ENCODE measurements at regions of chr17 and their contacts with region 1.

Region 1: DNA sequence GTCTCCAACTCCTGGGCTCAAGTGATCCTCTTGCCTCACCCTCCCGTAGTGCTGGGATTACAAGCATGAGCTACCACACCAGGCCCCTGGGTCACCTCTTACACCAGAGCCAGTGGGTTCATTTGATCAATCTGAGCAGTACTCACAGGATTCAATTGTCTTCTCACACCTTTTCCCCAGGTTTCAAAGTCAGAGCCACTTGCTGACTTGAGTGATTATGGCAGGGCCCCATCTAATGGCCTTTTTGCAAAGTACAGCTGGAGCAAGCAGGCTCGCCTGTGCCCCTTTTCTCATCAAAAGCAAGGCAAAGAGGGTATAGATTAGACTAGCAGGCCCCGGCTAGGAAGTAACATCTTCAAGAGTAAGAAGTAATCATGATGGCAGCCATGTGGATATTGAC is 114.8 kb upstream of the NOL11 start:
- DNase-seq: no peak
- ATAC-seq: peak; percentile 97
- H3K4me3 ChIP-seq: no peak overlapping the region
- H3K27ac ChIP-seq: peak overlapping the region; percentile 46
- H3K4me1 ChIP-seq: peaks cover 33% of the 10 kb centered on the region
- H3K27me3 ChIP-seq: no peaks in the 10 kb centered on the region
- CTCF ChIP-seq: peak; percentile 70 to 87 (median 73); a peak in 5 of 6 replicates
- EP300 ChIP-seq: no peak
- POLR2A ChIP-seq: no peak
- RAD21 ChIP-seq: peak; percentile 95

Region 2: GRCh38 chr17:67475236-67475937 is 127.6 kb before region 1 on chr17:
- CTCF ChIA-PET with region 1: interaction called, 34 read pairs
- POLR2A ChIA-PET with region 1: interaction called, 3 read pairs
- RAD21 ChIA-PET with region 1: interaction called, 4 read pairs
- SMC1A ChIA-PET with region 1: interaction called, 7 read pairs
- in situ Hi-C with region 1: no loop called
- intact Hi-C with region 1: loop called (anchors 1 kb)
- DNase-seq: peak; percentile 53
- ATAC-seq: peak; percentile 98
- H3K4me3 ChIP-seq: no peak overlapping the region; the same call in 1 of the 2 replicates
- H3K27ac ChIP-seq: peak overlapping the region; percentile 36; the same call in 1 of the 2 replicates
- H3K4me1 ChIP-seq: peaks cover 21% of the 10 kb centered on the region
- H3K27me3 ChIP-seq: no peaks in the 10 kb centered on the region
- CTCF ChIP-seq: peak; percentile 95 to 99 (median 96); a peak in 5 of 6 replicates
- EP300 ChIP-seq: no peak
- POLR2A ChIP-seq: no peak
- RAD21 ChIP-seq: peak; percentile 96

Region 3: DNA sequence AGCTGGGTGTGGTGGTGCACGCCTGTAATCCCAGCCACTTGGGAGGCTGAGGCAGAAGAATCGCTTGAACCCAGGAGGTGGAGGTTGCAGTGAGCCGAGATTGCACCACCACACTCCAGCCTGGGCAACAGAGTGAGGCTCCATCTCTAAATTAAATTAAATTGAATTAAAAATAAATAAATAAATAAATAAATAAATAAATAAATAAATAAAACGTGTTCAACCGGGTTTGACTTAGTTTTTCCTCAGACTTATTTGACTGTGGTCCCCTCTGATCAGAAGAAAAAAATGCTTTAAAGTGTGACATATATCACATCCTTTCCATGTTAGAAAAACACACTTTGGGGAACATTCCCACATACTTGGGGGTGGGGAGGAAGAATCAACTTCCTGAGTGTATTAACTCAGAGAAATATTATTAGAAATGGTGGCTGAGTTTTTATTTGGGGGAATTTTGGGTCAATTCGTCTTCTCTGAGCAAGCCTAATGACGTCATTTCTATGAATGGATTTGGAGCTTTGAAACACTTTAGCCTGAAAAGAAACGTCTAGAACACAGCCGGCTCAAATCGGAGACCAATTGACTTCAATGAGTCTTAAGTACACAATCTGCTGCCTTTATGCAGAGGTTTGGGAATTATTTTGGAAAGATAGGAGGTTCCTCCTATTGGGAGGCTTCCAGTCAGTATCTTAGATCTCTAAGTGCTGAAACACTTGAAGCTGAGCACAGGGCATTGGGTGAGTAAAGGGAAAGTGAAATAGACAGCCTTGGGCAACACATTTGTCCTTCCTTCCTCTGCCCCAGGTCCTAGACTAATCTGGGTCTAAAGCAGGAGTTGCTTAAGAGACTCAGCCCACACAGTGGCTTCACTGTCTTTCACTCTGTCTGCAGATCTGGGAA is 93.3 kb before region 1 on chr17:
- CTCF ChIA-PET with region 1: interaction called, 11 read pairs
- POLR2A ChIA-PET with region 1: no interaction called
- RAD21 ChIA-PET with region 1: interaction called, 11 read pairs
- SMC1A ChIA-PET with region 1: interaction called, 5 read pairs
- in situ Hi-C with region 1: no loop called
- intact Hi-C with region 1: no loop called
- DNase-seq: no peak
- ATAC-seq: peak; percentile 93
- H3K4me3 ChIP-seq: no peak overlapping the region
- H3K27ac ChIP-seq: peak overlapping the region; percentile 40
- H3K4me1 ChIP-seq: peaks cover 13% of the 10 kb centered on the region
- H3K27me3 ChIP-seq: no peaks in the 10 kb centered on the region
- CTCF ChIP-seq: no peak
- EP300 ChIP-seq: no peak
- POLR2A ChIP-seq: no peak
- RAD21 ChIP-seq: no peak

Region 4: GRCh38 chr17:67569873-67570272 is 33.1 kb before region 1 on chr17:
- CTCF ChIA-PET with region 1: interaction called, 38 read pairs
- POLR2A ChIA-PET with region 1: interaction called, 6 read pairs
- RAD21 ChIA-PET with region 1: interaction called, 36 read pairs
- SMC1A ChIA-PET with region 1: interaction called, 51 read pairs
- in situ Hi-C with region 1: no loop called
- intact Hi-C with region 1: no loop called
- DNase-seq: peak; percentile 57
- ATAC-seq: peak; percentile 49
- H3K4me3 ChIP-seq: peak overlapping the region; percentile 57
- H3K27ac ChIP-seq: peak overlapping the region; percentile 88
- H3K4me1 ChIP-seq: peaks cover 60% of the 10 kb centered on the region
- H3K27me3 ChIP-seq: no peaks in the 10 kb centered on the region
- CTCF ChIP-seq: no peak
- EP300 ChIP-seq: peak; percentile 58 to 69; a peak in 2 of 4 replicates
- POLR2A ChIP-seq: no peak
- RAD21 ChIP-seq: no peak

Region 5: GRCh38 chr17:67647482-67647881 is 44.5 kb after region 1 on chr17:
- CTCF ChIA-PET with region 1: interaction called, 33 read pairs
- POLR2A ChIA-PET with region 1: interaction called, 7 read pairs
- RAD21 ChIA-PET with region 1: interaction called, 41 read pairs
- SMC1A ChIA-PET with region 1: interaction called, 43 read pairs
- in situ Hi-C with region 1: no loop called
- intact Hi-C with region 1: loop called (anchors 2 kb)
- DNase-seq: peak; percentile 67
- ATAC-seq: peak; percentile 59
- H3K4me3 ChIP-seq: no peak overlapping the region
- H3K27ac ChIP-seq: peak overlapping the region; percentile 92
- H3K4me1 ChIP-seq: peaks cover 60% of the 10 kb centered on the region
- H3K27me3 ChIP-seq: no peaks in the 10 kb centered on the region
- CTCF ChIP-seq: no peak
- EP300 ChIP-seq: peak in 1 of 2 experiments; percentile 78; a peak in 2 of 4 replicates
- POLR2A ChIP-seq: no peak
- RAD21 ChIP-seq: peak; percentile 34; the same call in 1 of the 2 replicates

Measured in GM12878 (cell line).